RWPE1 (cell line): ENCODE measurements at regions of chr5 and their contacts with region 1.

Region 1: DNA sequence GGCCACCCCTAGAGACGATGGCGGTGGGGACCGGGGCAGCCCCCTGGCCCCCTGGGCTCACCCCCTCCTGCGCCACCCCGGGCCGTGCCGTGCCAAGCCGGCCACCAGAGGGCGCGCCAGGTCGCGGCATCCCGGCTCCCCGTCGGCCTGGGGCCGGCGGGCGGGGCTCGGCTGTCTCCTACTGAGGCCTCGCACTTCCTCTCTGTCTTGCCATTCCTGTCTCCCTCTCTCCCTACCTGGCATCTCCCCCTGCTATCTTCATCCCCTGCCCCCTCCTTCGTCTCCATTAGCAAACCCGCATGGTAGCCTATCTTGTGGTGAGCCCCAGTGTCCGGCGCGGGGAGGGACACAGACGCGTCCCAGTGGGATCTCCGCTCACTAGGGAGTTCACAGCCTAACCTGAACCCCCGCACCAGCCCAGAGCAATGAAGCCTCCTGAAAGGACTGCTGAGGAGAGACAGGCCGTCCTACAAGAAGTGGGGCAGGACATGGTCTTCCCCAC is 29.8 kb upstream of the FABP6 start:
- DNase-seq: peak; percentile 86
- H3K27ac ChIP-seq: no peak overlapping the region
- CTCF ChIP-seq: peak; percentile 99

Region 2: DNA sequence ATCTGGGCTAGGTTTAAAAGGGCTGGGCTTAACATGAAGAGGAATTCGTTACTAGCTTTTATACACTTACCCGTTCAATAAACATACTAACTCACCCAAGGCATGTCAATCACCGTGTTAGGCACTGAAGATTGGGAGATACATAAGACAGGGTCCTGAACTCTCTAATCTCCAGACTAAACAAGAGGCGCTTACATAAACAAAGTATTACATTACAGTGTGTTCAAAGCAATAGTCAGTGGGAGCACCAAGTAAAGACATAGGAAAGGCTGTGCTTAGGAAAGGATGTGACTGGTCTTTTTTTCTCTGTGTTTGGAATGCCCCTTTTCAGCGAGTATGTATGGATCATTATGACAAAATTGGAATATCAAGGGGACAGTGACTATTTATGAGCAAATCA is 486.8 kb before region 1 on chr5:
- CTCF ChIA-PET with region 1: no interaction called
- POLR2A ChIA-PET with region 1: no interaction called
- DNase-seq: no peak
- H3K27ac ChIP-seq: no peak overlapping the region
- CTCF ChIP-seq: no peak

Region 3: DNA sequence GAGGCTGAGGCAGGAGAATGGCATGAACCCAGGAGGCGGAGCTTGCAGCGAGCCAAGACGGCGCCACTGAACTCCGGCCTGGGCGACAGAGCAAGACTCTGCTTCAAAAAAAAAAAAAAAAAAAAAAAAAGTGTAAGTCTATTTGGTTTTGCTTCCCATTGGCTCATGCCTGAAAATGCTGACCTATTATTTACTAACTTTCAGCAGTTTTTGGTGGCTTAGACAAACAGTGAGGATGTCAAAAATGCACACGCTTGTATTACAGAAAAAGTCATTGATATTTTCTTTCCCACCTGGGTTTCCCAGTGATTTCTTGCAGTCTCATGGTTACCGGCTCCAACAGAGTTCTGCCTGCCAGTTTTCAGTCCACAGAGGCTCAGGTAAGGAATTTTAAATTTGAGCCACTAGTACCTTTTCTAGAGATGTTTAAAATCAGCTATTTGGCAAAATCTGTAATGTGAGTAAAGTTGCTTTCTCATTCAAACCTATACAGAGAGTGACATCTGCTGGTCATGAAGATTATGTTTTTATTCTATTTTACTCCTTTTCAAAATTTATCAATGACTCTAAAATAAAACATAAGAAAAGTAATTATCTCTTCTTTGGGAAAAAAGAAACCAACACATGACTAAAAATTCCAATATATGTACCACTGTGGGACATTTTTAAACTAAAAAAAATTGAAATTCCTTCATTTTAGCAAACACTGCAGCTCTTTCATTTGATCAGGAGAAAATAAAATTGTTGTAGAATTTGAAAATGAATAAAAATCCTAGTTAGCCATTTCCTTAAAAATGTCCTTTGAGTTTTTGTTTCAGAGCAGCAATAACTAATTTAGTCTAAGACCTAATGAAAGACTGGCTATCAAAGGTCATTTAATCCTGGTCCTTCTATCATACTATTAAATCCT is 191.6 kb after region 1 on chr5:
- CTCF ChIA-PET with region 1: interaction called, 12 read pairs
- POLR2A ChIA-PET with region 1: no interaction called
- DNase-seq: no peak
- H3K27ac ChIP-seq: no peak overlapping the region
- CTCF ChIP-seq: peak; percentile 75